ENCODE measurements at regions of chr1 and their contacts with region 1.

Region 1: GRCh38 chr1:28313710-28314546 is 14.9 kb upstream of the MED18 start:
- DNase-seq: peak; percentile 90 to 91
- H3K4me3 ChIP-seq: no peak overlapping the region
- H3K27ac ChIP-seq: peak overlapping the region; percentile 72
- H3K4me1 ChIP-seq: peaks cover 32% of the 10 kb centered on the region
- H3K27me3 ChIP-seq: no peaks in the 10 kb centered on the region
- CTCF ChIP-seq: no peak

Region 2: GRCh38 chr1:28176492-28177470 is 137.1 kb before region 1 on chr1 and contains the start of gene PTAFR:
- CTCF ChIA-PET with region 1: no interaction called
- POLR2A ChIA-PET with region 1: no interaction called
- intact Hi-C with region 1: no loop called
- DNase-seq: no peak
- H3K4me3 ChIP-seq: no peak within 1 kb of the TSS
- H3K27ac ChIP-seq: no peak within 1 kb of the TSS
- H3K4me1 ChIP-seq: no peaks in the 10 kb centered on the region
- H3K27me3 ChIP-seq: no peaks in the 10 kb centered on the region
- CTCF ChIP-seq: no peak
- total RNA-seq, gene PTAFR: 7.6 and 12.2 TPM in 2 replicates

Region 3: GRCh38 chr1:28301471-28302174 is 12.3 kb before region 1 on chr1:
- CTCF ChIA-PET with region 1: no interaction called
- POLR2A ChIA-PET with region 1: interaction called, 15 read pairs
- intact Hi-C with region 1: no loop called
- DNase-seq: peak; percentile 12 to 46
- H3K4me3 ChIP-seq: no peak overlapping the region
- H3K27ac ChIP-seq: no peak overlapping the region
- H3K4me1 ChIP-seq: no peaks in the 10 kb centered on the region
- H3K27me3 ChIP-seq: no peaks in the 10 kb centered on the region
- CTCF ChIP-seq: no peak

Region 4: DNA sequence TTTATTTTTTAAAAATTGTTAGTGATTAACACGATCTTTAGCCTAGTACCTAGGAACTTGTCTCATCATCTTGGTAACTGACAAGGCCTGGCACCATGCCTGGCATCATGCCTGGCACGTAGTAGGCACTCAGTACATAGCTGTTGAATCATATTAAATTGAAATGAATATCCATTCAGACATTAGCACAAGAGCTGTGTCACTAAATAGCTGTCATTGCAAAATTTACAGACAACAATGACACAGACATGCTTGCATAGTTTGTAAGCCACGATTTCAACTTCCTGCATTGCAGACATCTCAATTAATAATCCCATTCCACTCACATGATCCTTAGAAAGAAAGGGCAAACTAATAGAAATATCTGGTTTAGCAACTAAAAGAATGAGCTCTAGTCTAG is 40.2 kb after region 1 on chr1:
- CTCF ChIA-PET with region 1: interaction called, 10 read pairs
- POLR2A ChIA-PET with region 1: no interaction called
- intact Hi-C with region 1: no loop called
- DNase-seq: peak in 1 of 2 experiments; percentile 92
- H3K4me3 ChIP-seq: no peak overlapping the region
- H3K27ac ChIP-seq: peak overlapping the region; percentile 90
- H3K4me1 ChIP-seq: peaks cover 40% of the 10 kb centered on the region
- H3K27me3 ChIP-seq: no peaks in the 10 kb centered on the region
- CTCF ChIP-seq: no peak

Region 5: DNA sequence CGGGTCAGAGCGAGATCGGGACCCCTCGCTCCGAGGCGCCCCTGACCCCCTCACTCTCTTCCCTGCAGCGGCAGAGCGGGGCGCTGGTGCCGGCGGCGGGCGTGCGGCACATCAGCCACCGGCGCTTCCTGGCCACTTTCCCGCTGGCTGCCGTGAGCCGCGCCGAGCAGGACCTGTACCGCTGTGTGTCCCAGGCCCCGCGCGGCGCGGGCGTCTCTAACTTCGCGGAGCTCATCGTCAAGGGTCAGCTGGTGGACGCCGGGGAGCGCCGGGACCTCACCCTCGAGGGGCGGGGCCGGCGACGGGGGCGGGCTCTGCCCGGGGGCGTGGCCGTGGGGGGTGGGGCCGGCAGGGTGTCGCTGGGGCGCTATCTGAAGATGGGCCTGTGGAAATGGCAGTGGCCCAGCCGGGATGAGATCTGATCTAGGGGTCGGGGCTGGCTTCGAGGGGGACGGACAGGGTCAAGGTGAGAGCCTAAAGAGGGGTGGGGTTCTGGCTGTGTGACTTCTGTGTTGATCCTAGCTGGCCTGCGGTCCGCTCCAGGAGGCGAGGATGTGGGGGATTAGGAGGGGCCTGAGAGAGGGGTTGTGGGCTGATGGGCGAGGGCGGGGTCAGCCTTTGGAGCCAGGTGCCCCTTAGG is 946.0 kb after region 1 on chr1:
- CTCF ChIA-PET with region 1: no interaction called
- POLR2A ChIA-PET with region 1: no interaction called
- intact Hi-C with region 1: no loop called
- DNase-seq: no peak
- H3K4me3 ChIP-seq: no peak overlapping the region
- H3K27ac ChIP-seq: no peak overlapping the region
- H3K4me1 ChIP-seq: 0 out of 2 replicates have a peak, but pooled peaks cover 8% of the 10 kb centered on the region
- H3K27me3 ChIP-seq: no peaks in the 10 kb centered on the region
- CTCF ChIP-seq: no peak

Measured in PC-9 (cell line).